ENCODE measurements at regions of chr2 and their contacts with region 1.

Region 1: GRCh38 chr2:179253226-179253625 is 11.4 kb downstream of the SESTD1 start:
- DNase-seq: no peak
- ATAC-seq: peak; percentile 75
- H3K4me3 ChIP-seq: no peak overlapping the region
- H3K27ac ChIP-seq: peak overlapping the region; percentile 63; the same call in 1 of the 2 replicates
- H3K4me1 ChIP-seq: peaks cover 42% of the 10 kb centered on the region
- H3K27me3 ChIP-seq: no peaks in the 10 kb centered on the region
- CTCF ChIP-seq: no peak
- EP300 ChIP-seq: no peak
- POLR2A ChIP-seq: no peak
- RAD21 ChIP-seq: no peak

Region 2: DNA sequence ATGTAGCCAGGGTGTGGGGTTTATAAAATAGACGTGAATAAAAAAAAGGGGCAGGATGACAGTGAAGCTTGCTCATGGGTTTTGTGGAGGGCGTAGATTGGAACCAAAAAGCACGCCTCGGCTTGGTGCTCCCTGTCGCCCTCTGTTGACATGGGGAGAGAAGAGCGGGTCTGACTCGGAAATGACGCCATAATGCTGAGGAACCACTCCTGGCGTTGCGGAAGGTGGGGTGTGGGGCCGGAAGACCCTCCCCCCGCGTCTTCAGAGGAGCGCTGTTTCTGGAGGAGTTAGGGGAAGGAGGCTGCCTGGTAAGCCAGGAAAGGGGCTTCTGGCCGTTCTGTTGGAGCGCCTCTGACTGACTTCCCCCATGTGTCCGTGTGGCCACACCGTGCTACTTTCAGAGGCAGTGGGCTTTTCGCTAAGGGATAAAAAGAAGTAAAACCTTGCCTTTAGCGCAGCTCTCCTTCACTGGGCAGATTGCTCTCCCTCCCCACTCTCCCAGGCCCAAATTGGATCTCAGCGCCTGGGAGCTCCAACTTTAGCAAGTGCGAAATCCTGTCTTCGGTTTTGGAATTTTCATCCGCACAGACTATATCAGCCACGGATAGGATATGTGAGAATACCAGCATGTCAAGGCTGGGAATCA is 730.2 kb before region 1 on chr2:
- CTCF ChIA-PET with region 1: no interaction called
- POLR2A ChIA-PET with region 1: no interaction called
- RAD21 ChIA-PET with region 1: no interaction called
- SMC1A ChIA-PET with region 1: no interaction called
- in situ Hi-C with region 1: no loop called
- intact Hi-C with region 1: loop called (anchors 10 kb)
- DNase-seq: peak; percentile 57
- ATAC-seq: peak; percentile 91
- H3K4me3 ChIP-seq: peak overlapping the region; percentile 80
- H3K27ac ChIP-seq: peak overlapping the region; percentile 74
- H3K4me1 ChIP-seq: peaks cover 11% of the 10 kb centered on the region; the same call in 1 of the 2 replicates
- H3K27me3 ChIP-seq: no peaks in the 10 kb centered on the region
- CTCF ChIP-seq: peak; percentile 77 to 93 (median 87)
- EP300 ChIP-seq: no peak
- POLR2A ChIP-seq: peak; percentile 88
- RAD21 ChIP-seq: peak; percentile 43

Region 3: DNA sequence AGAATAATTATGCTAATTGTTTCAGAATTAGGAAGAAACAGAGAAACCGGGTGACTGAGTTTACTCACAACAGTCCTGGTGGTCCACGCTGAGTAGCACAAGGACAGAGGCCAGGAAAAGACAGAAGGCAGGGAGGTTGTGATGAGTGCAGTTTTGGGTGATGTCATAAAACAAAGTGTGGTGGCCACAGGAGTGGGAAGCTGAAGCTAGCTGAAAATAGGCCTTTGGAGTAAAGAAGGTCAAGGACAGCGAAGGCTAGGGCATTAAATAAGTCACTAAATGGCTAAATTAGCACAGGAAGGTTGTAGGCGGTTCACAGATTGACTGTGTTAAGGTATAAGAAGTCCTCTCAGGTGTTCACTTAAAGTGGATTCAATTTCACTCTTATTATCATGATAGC is 325.1 kb before region 1 on chr2:
- CTCF ChIA-PET with region 1: no interaction called
- POLR2A ChIA-PET with region 1: no interaction called
- RAD21 ChIA-PET with region 1: no interaction called
- SMC1A ChIA-PET with region 1: no interaction called
- in situ Hi-C with region 1: no loop called
- intact Hi-C with region 1: no loop called
- DNase-seq: peak; percentile 24
- ATAC-seq: peak; percentile 85
- H3K4me3 ChIP-seq: 0 out of 2 replicates have a peak overlapping the region, but pooled peaks have one; percentile 64
- H3K27ac ChIP-seq: no peak overlapping the region; the same call in 1 of the 2 replicates
- H3K4me1 ChIP-seq: peaks cover 14% of the 10 kb centered on the region
- H3K27me3 ChIP-seq: no peaks in the 10 kb centered on the region
- CTCF ChIP-seq: no peak
- EP300 ChIP-seq: no peak
- POLR2A ChIP-seq: no peak
- RAD21 ChIP-seq: no peak

Region 4: GRCh38 chr2:179239195-179239594 is 14.0 kb before region 1 on chr2:
- CTCF ChIA-PET with region 1: interaction called, 30 read pairs
- POLR2A ChIA-PET with region 1: interaction called, 10 read pairs
- RAD21 ChIA-PET with region 1: interaction called, 14 read pairs
- SMC1A ChIA-PET with region 1: interaction called, 18 read pairs
- in situ Hi-C with region 1: no loop called
- intact Hi-C with region 1: no loop called
- DNase-seq: no peak
- ATAC-seq: peak; percentile 83
- H3K4me3 ChIP-seq: no peak overlapping the region
- H3K27ac ChIP-seq: no peak overlapping the region
- H3K4me1 ChIP-seq: no peaks in the 10 kb centered on the region
- H3K27me3 ChIP-seq: no peaks in the 10 kb centered on the region
- CTCF ChIP-seq: no peak
- EP300 ChIP-seq: no peak
- POLR2A ChIP-seq: no peak
- RAD21 ChIP-seq: no peak

Region 5: DNA sequence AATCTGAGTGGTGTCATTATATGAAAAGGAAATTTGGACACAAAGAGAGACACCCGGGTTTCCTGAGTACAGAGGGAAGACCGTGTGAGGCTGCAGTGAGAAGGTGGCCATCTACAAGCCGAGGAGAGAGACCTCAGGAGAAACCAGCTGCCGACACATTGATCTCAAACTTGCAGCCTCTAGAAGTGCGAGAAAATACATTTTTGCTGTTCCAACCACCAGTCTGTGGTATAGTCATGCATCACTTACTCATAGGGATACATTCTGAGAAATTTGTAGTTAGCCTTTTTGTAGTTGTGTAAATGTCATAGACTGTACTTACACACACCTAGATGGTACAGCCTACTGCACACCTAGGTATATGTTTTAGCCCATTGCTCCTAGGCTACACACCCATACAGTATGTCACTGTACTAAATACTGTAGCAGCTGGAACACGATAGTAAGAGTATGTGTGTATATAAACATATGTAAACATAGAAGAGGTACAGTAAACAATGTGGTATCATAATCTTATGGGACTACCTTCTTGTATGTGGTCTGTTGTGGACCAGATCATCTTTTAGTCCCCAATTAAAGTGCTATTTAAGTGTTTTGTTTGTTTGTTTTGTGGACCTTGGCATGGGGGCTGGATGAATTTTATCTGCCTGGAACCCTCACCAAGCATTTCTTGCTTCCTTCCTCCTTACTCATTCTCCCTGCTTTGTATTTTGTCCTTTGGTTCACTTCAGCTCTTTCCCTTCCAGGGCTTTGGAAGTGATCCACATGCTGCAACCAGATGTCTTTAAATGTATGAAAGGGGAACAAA is 49.7 kb after region 1 on chr2:
- CTCF ChIA-PET with region 1: no interaction called
- POLR2A ChIA-PET with region 1: no interaction called
- RAD21 ChIA-PET with region 1: no interaction called
- SMC1A ChIA-PET with region 1: no interaction called
- in situ Hi-C with region 1: no loop called
- intact Hi-C with region 1: no loop called
- DNase-seq: no peak
- ATAC-seq: no peak
- H3K4me3 ChIP-seq: no peak overlapping the region
- H3K27ac ChIP-seq: no peak overlapping the region
- H3K4me1 ChIP-seq: no peaks in the 10 kb centered on the region
- H3K27me3 ChIP-seq: no peaks in the 10 kb centered on the region; a peak in 1 of 4 replicates
- CTCF ChIP-seq: no peak
- EP300 ChIP-seq: no peak
- POLR2A ChIP-seq: no peak
- RAD21 ChIP-seq: no peak

Region 6: GRCh38 chr2:179383975-179384374 is 130.7 kb after region 1 on chr2:
- CTCF ChIA-PET with region 1: no interaction called
- POLR2A ChIA-PET with region 1: no interaction called
- RAD21 ChIA-PET with region 1: no interaction called
- SMC1A ChIA-PET with region 1: no interaction called
- in situ Hi-C with region 1: no loop called
- intact Hi-C with region 1: no loop called
- DNase-seq: no peak
- ATAC-seq: no peak
- H3K4me3 ChIP-seq: no peak overlapping the region
- H3K27ac ChIP-seq: no peak overlapping the region
- H3K4me1 ChIP-seq: no peaks in the 10 kb centered on the region
- H3K27me3 ChIP-seq: no peaks in the 10 kb centered on the region
- CTCF ChIP-seq: no peak
- EP300 ChIP-seq: no peak
- POLR2A ChIP-seq: no peak
- RAD21 ChIP-seq: no peak